Activated T-helper 1 cell treated with anti-CD3 and anti-CD28 coated beads, Interleukin-12 subunit alpha, Interleukin-12 subunit beta, Interleukin-2, Interleukin-4 antibody, amounts not matched to agents 30 ng/mL and 10 ng/mL and 1 ng/mL, durations not matched to agents 14 hours and 24 hours and 36 hours (primary cell): ENCODE measurements at regions of chr16 and their contacts with region 1.

Region 1: GRCh38 chr16:30602616-30603277 is 7.4 kb downstream of the ZNF689 start:
- DNase-seq: no peak
- H3K4me3 Mint-ChIP-seq: no peak overlapping the region
- H3K27ac Mint-ChIP-seq: peak overlapping the region; percentile 40
- H3K4me1 Mint-ChIP-seq: peaks cover 12% of the 10 kb centered on the region
- H3K27me3 Mint-ChIP-seq: no peaks in the 10 kb centered on the region

Region 2: GRCh38 chr16:30491744-30492308 is 110.9 kb before region 1 on chr16:
- intact Hi-C with region 1: loop called (anchors 5 kb)
- DNase-seq: no peak
- H3K4me3 Mint-ChIP-seq: no peak overlapping the region
- H3K27ac Mint-ChIP-seq: peak overlapping the region; percentile 85
- H3K4me1 Mint-ChIP-seq: peaks cover 31% of the 10 kb centered on the region
- H3K27me3 Mint-ChIP-seq: no peaks in the 10 kb centered on the region

Region 3: DNA sequence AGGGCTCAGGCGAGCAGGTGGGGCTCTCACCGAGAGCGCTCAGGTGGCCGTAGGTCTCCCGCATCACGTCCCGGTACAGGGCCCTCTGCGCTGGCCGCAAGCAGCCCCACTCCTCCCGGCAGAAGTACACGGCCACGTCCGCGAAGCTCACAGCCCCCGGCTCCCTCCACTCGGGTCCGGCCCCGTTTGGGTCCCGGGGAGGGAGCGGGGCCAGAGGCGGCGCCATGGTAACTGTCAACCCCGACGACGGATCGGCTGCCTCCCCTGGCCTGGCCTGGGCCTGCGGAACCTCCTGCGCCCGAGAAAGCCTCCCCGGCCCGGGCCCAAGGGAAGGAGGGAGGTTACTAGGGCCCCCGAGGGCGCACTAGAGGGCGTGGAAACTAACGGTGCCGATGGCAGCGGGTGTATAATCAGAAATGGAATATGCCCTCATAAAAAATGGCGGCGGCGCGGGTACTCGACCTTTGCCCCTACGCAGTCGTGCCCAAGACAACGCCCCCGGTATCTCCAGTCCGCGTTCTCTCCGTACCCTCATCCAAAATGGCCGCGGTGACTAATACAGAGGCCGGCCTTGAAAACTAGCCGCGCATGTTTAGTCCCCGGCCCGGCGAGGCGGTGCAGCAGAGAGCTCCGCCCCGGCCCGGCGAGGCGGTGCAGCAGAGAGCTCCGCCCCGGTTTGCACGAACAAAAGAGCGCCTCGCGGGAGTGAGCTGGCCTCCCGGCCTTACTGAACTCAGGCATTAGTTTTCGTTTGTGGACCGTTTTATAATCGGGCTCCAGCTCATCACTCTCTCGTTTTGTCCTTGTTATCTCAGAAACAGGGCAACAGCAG is 44.6 kb before region 1 on chr16 and contains the start of gene ZNF764:
- intact Hi-C with region 1: loop called (anchors 1 kb)
- DNase-seq: peak; percentile 97
- H3K4me3 Mint-ChIP-seq: peak within 1 kb of the TSS; percentile 90
- H3K27ac Mint-ChIP-seq: peak within 1 kb of the TSS; percentile 92
- H3K4me1 Mint-ChIP-seq: peaks cover 42% of the 10 kb centered on the region
- H3K27me3 Mint-ChIP-seq: no peaks in the 10 kb centered on the region
- total RNA-seq, gene ZNF764: 17.9 and 21.2 TPM in 2 replicates

Region 4: GRCh38 chr16:30669896-30670797 is 67.4 kb after region 1 on chr16:
- intact Hi-C with region 1: no loop called
- DNase-seq: no peak
- H3K4me3 Mint-ChIP-seq: no peak overlapping the region
- H3K27ac Mint-ChIP-seq: no peak overlapping the region
- H3K4me1 Mint-ChIP-seq: peaks cover 6% of the 10 kb centered on the region
- H3K27me3 Mint-ChIP-seq: no peaks in the 10 kb centered on the region